ENCODE measurements at regions of chr12 and their contacts with region 1.

Region 1: DNA sequence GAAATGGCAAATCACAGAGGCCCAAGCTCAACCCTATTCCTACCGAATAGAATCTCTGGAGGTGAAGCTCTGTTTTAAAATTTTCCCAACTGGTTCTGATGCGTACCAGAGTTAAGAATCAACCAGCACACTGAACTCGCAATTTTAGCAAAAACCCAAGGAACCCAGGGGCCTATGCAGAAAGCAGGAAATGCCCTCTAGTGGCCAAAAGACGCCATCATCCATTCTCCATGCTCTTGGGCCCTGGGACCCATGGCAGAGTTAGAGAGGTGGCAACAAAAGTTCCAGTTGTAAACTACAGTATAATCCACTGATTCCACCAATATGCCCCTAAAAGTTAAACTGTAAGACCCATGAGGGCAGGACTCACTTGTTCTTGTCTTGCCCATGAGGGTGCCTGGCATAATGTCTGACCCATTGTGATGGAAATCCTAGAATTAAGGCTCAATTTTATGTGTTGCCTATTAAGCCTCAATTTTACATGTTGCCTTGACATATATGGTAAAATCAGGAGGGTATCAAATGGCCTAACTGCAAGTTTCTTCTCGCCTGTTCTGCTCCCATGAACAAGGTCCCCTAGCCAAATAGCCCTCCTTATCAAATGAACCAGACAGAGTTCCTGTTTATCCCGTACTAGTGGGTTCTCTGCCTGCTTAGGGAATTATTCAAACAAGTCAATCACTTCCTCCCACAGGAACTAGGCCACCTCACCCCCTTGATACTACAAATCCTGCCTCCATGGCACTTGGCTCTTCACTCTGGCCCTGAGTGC is 137.5 kb upstream of the CPM start:
- DNase-seq: peak; percentile 61 to 76 (median 70)
- ATAC-seq: peak; percentile 99
- H3K4me3 ChIP-seq: no peak overlapping the region
- H3K27ac ChIP-seq: no peak overlapping the region
- H3K4me1 ChIP-seq: no peaks in the 10 kb centered on the region
- H3K27me3 ChIP-seq: peaks cover 0 to 15% of the 10 kb centered on the region in 2 experiments; a peak in 3 of 5 replicates
- CTCF ChIP-seq: peak; percentile 78 to 89 (median 86)
- EP300 ChIP-seq: no peak
- POLR2A ChIP-seq: no peak
- RAD21 ChIP-seq: peak; percentile 75 to 85

Region 2: DNA sequence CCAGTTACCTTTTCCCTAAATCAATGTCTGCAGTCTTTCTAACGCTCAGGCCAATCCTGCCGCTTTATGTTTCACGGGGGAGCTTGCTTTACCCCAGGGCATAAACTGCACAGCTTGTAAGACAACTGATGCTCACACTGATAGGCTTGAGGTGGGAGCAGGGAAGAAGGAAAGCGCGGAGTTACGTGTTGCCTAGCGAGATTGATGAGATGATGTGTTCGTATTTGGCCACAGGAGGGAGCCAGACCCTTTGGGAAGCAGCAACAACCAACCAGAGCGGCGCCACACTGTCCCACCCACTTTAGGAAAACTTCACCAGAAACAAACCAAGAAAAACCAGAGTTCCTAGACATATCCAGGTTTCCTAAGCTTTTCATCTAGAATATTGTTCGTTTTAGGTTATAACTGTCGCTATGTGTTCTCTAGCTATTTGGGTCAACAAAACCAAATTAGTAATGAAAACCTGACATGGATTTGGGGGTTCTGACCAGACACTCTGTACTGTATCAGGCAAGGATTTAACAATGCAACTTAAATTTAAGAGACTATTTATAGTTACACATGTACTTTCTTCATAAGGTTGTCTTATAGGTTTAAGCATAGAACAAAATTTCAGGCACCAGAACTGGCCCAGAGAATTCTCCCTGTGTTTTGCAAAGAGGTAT is 847.3 kb before region 1 on chr12:
- CTCF ChIA-PET with region 1: no interaction called
- POLR2A ChIA-PET with region 1: no interaction called
- in situ Hi-C with region 1: no loop called
- intact Hi-C with region 1: loop called (anchors 1 kb)
- DNase-seq: peak; percentile 79 to 90 (median 85)
- ATAC-seq: peak; percentile 100
- H3K4me3 ChIP-seq: no peak overlapping the region
- H3K27ac ChIP-seq: no peak overlapping the region
- H3K4me1 ChIP-seq: no peaks in the 10 kb centered on the region; a peak in 1 of 5 replicates
- H3K27me3 ChIP-seq: peaks cover 3 to 7% of the 10 kb centered on the region in 2 experiments; a peak in 2 of 5 replicates
- CTCF ChIP-seq: peak; percentile 89 to 94 (median 91)
- EP300 ChIP-seq: no peak
- POLR2A ChIP-seq: no peak
- RAD21 ChIP-seq: peak; percentile 97

Region 3: GRCh38 chr12:68863109-68863770 is 207.3 kb before region 1 on chr12:
- CTCF ChIA-PET with region 1: no interaction called
- POLR2A ChIA-PET with region 1: no interaction called
- in situ Hi-C with region 1: loop called (anchors 25 kb)
- intact Hi-C with region 1: loop called (anchors 1 kb)
- DNase-seq: no peak
- ATAC-seq: no peak
- H3K4me3 ChIP-seq: no peak overlapping the region
- H3K27ac ChIP-seq: no peak overlapping the region; the same call in 2 of the 3 replicates
- H3K4me1 ChIP-seq: no peaks in the 10 kb centered on the region; a peak in 1 of 5 replicates
- H3K27me3 ChIP-seq: peaks cover 10 to 20% of the 10 kb centered on the region in 2 experiments; a peak in 4 of 5 replicates
- CTCF ChIP-seq: no peak
- EP300 ChIP-seq: no peak
- POLR2A ChIP-seq: no peak
- RAD21 ChIP-seq: no peak

Region 4: DNA sequence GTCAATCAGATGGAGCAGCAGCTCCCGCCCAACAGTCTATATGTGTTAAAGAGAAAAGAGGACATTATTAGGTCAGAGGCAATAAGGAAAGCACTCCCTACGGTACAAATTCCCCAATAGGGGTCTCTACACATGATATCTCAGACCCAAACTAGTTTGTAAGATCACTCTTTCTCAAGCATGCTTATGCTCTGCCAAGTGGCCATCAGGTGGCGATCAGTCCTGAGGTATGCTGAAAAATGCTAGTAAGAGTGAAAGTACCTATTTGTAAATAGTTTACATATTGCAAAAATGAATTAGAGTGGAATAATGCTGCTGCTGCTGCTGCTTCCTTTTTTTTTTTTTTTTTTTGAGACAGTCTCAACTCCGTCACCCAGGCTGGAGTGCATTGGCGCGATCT is 198.6 kb before region 1 on chr12:
- CTCF ChIA-PET with region 1: interaction called, 3 read pairs
- POLR2A ChIA-PET with region 1: no interaction called
- in situ Hi-C with region 1: loop called (anchors 25 kb)
- intact Hi-C with region 1: no loop called
- DNase-seq: peak in 1 of 4 experiments; percentile 12
- ATAC-seq: peak; percentile 54; the same call in 1 of the 3 replicates
- H3K4me3 ChIP-seq: no peak overlapping the region
- H3K27ac ChIP-seq: no peak overlapping the region
- H3K4me1 ChIP-seq: no peaks in the 10 kb centered on the region; a peak in 1 of 5 replicates
- H3K27me3 ChIP-seq: peaks cover 17 to 59% of the 10 kb centered on the region in 2 experiments
- CTCF ChIP-seq: peak; percentile 11 to 31 (median 29); a peak in 2 of 6 replicates
- EP300 ChIP-seq: no peak
- POLR2A ChIP-seq: no peak
- RAD21 ChIP-seq: peak in 1 of 2 experiments; percentile 40; a peak in 1 of 4 replicates

Region 5: GRCh38 chr12:69130064-69130463 is 59.6 kb after region 1 on chr12:
- CTCF ChIA-PET with region 1: no interaction called
- POLR2A ChIA-PET with region 1: no interaction called
- in situ Hi-C with region 1: no loop called
- intact Hi-C with region 1: no loop called
- DNase-seq: no peak
- ATAC-seq: no peak
- H3K4me3 ChIP-seq: no peak overlapping the region
- H3K27ac ChIP-seq: no peak overlapping the region
- H3K4me1 ChIP-seq: no peaks in the 10 kb centered on the region
- H3K27me3 ChIP-seq: peaks cover 5 to 15% of the 10 kb centered on the region in 2 experiments; a peak in 4 of 5 replicates
- CTCF ChIP-seq: no peak
- EP300 ChIP-seq: no peak
- POLR2A ChIP-seq: no peak
- RAD21 ChIP-seq: no peak